ENCODE measurements at regions of chr12 and their contacts with region 1.

Region 1: GRCh38 chr12:70242695-70243509 is at the start of gene CNOT2:
- DNase-seq: peak; percentile 94
- ATAC-seq: peak; percentile 88
- H3K4me3 Mint-ChIP-seq: peak within 1 kb of the TSS; percentile 87
- H3K27ac Mint-ChIP-seq: peak within 1 kb of the TSS; percentile 99
- H3K4me1 Mint-ChIP-seq: peaks cover 45% of the 10 kb centered on the region
- H3K27me3 Mint-ChIP-seq: no peaks in the 10 kb centered on the region
- CTCF ChIP-seq: no peak
- total RNA-seq, gene CNOT2: 67.9 to 69.0 TPM

Region 2: DNA sequence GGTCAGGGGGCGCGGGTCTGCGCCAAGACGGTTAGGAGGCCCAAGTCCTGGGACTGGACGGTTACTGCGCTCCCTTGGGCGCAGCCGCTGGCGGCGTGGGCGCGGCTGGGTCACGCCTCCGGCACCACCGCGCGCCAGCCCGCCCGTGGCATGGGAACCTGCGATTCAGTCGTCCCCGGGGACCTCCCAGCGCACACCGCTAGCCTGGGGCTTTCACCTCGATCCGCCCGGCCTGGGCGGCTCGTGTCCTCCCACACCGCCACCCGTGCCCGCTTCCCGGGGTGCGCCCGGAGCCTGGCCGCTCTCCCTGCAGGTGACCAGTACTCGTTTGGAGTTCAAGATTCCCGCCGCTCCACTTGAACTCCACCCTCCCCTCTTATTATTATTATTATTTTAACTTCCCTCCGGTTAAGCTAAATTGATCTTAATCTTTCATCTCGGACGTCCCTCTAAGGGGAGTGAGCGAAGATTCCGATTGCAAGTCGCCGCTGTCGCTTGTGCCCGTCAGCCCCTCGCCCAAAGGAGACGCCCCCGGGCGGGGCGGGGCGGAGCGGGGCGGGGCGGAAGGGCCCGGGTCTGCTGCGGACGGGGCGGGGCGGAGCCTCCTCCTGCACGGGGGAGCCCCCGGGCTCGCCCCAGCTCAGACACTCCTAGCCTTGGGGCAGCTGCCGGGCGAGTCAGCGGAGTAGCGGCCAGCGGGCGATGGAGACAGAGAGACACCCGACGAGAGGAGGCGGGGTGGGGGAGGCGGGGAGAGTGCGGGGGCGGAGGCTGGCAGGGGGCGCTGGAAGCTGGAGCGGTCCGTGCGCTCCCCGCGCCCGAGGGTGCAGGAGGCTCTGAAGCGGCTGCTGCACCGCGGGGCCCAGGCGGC is 123.0 kb after region 1 on chr12 and contains the start of gene KCNMB4:
- CTCF ChIA-PET with region 1: no interaction called
- POLR2A ChIA-PET with region 1: interaction called, 3 read pairs
- intact Hi-C with region 1: loop called (anchors 5 kb)
- DNase-seq: peak; percentile 79
- ATAC-seq: peak; percentile 88
- H3K4me3 Mint-ChIP-seq: peak within 1 kb of the TSS; percentile 95
- H3K27ac Mint-ChIP-seq: peak within 1 kb of the TSS; percentile 59
- H3K4me1 Mint-ChIP-seq: peaks cover 15% of the 10 kb centered on the region
- H3K27me3 Mint-ChIP-seq: peaks cover 9% of the 10 kb centered on the region
- CTCF ChIP-seq: no peak
- total RNA-seq, gene KCNMB4: 1.0 to 1.3 TPM